GM23248 (cell line): ENCODE measurements at regions of chr13 and their contacts with region 1.

Region 1: GRCh38 chr13:86870444-86870843 is 800.7 kb upstream of the SLITRK5 start:
- DNase-seq: peak; percentile 64
- H3K4me3 ChIP-seq: no peak overlapping the region
- H3K27ac ChIP-seq: no peak overlapping the region
- H3K4me1 ChIP-seq: no peaks in the 10 kb centered on the region
- H3K27me3 ChIP-seq: no peaks in the 10 kb centered on the region

Region 2: GRCh38 chr13:87274209-87274819 is 403.9 kb after region 1 on chr13:
- in situ Hi-C with region 1: loop called (anchors 10 kb)
- DNase-seq: peak; percentile 69
- H3K4me3 ChIP-seq: no peak overlapping the region
- H3K27ac ChIP-seq: no peak overlapping the region
- H3K4me1 ChIP-seq: no peaks in the 10 kb centered on the region
- H3K27me3 ChIP-seq: no peaks in the 10 kb centered on the region; the same call in 1 of the 2 replicates